Activated naive CD4-positive, alpha-beta T cell treated with anti-CD3 and anti-CD28 coated beads for 36 hours (primary cell): ENCODE measurements at regions of chr18 and their contacts with region 1.

Region 1: GRCh38 chr18:76398896-76399612 is 96.0 kb downstream of the ZNF516 start:
- DNase-seq: peak; percentile 88
- H3K4me3 Mint-ChIP-seq: no peak overlapping the region
- H3K27ac Mint-ChIP-seq: no peak overlapping the region
- H3K4me1 Mint-ChIP-seq: peaks cover 6% of the 10 kb centered on the region
- H3K27me3 Mint-ChIP-seq: no peaks in the 10 kb centered on the region

Region 2: DNA sequence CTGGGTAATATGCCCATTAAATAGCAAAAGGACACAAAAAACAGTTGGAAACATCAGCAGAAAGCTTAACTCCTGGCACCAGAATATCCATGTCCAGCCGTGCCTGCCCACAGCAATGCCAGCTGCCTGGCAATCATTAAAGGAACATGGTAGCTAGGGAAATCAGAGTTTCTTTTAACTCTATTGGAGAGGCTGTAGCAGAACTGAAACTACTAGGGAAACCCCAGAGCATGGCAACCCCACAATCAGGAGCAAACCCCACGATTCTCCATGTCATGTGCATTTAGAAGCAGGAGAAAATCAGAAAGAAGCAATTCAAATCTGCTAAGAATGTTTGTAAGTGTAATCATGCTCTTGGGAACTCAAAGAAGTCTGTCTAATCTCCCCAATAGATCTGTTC is 562.5 kb before region 1 on chr18:
- CTCF ChIA-PET with region 1: no interaction called
- intact Hi-C with region 1: no loop called
- DNase-seq: no peak
- H3K4me3 Mint-ChIP-seq: no peak overlapping the region
- H3K27ac Mint-ChIP-seq: no peak overlapping the region
- H3K4me1 Mint-ChIP-seq: no peaks in the 10 kb centered on the region
- H3K27me3 Mint-ChIP-seq: peaks cover 5% of the 10 kb centered on the region

Region 3: DNA sequence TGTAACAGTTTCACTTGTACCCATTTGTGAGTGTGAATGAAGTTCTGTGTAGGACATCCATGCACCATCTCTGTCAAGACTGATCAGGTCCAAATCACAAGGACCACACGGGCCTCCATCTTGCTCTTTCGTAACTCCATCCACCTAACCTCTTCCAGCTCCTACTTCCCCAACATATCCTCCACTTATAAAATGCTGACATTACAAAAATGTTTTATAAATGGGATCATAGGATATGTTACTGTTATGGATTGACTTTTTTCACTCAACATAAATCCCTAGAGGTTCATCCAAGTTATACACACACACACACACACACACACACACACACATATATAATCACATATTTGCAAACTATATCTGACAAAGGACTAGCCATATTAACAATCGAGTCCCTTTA is 380.8 kb before region 1 on chr18:
- CTCF ChIA-PET with region 1: no interaction called
- intact Hi-C with region 1: no loop called
- DNase-seq: no peak
- H3K4me3 Mint-ChIP-seq: no peak overlapping the region
- H3K27ac Mint-ChIP-seq: no peak overlapping the region
- H3K4me1 Mint-ChIP-seq: no peaks in the 10 kb centered on the region
- H3K27me3 Mint-ChIP-seq: peaks cover 6% of the 10 kb centered on the region

Region 4: DNA sequence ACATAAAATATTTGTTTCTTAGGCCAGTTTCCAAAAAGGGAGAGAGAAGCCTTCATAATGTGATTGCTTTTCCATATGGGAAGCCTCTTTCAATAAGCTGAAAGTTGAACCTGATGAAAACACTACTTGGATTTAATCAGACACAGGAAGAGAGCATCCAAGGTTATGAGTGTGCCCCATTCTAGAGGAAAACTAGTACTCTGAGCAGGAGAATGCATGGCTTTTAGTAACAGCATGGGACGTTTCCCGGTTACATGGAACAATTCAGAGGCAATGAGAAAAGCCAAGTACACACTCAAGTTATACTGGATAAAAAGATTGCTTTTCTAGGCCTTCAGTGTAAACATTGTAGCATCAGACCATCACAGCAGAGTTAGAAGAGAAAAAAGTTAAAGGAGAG is 219.8 kb before region 1 on chr18:
- CTCF ChIA-PET with region 1: no interaction called
- intact Hi-C with region 1: no loop called
- DNase-seq: no peak
- H3K4me3 Mint-ChIP-seq: no peak overlapping the region
- H3K27ac Mint-ChIP-seq: no peak overlapping the region
- H3K4me1 Mint-ChIP-seq: no peaks in the 10 kb centered on the region
- H3K27me3 Mint-ChIP-seq: no peaks in the 10 kb centered on the region

Region 5: DNA sequence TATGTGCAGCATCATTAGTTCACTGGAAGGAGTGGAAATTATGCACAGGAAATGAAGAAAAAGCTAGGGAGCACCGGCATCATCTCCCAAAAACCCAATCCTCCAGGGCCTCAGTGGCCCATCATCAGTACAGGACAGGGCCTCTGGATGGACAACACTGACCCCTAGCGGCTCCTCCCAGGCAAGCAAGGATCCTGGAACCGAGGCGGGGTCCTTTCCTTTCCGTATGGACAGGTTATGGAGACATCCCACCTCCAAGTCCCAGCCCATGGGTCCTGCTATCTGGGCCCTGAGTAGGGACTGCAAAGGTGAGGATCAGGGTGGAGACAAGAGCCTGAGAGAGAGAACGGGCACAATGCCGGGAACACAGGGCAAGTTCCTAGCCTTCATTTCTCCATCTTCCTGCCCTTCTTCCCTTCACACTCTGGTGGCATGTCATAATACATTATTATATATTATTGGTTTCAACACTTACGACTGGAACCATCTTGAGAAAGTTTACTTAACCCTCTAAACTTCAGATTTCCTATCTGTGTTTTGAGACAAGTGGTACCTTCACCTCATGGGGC is 27.8 kb after region 1 on chr18:
- CTCF ChIA-PET with region 1: no interaction called
- intact Hi-C with region 1: loop called (anchors 2 kb)
- DNase-seq: peak; percentile 23
- H3K4me3 Mint-ChIP-seq: no peak overlapping the region
- H3K27ac Mint-ChIP-seq: no peak overlapping the region
- H3K4me1 Mint-ChIP-seq: peaks cover 27% of the 10 kb centered on the region
- H3K27me3 Mint-ChIP-seq: no peaks in the 10 kb centered on the region

Region 6: GRCh38 chr18:76437011-76437410 is 38.0 kb after region 1 on chr18:
- CTCF ChIA-PET with region 1: no interaction called
- intact Hi-C with region 1: no loop called
- DNase-seq: no peak
- H3K4me3 Mint-ChIP-seq: no peak overlapping the region
- H3K27ac Mint-ChIP-seq: no peak overlapping the region
- H3K4me1 Mint-ChIP-seq: no peaks in the 10 kb centered on the region
- H3K27me3 Mint-ChIP-seq: no peaks in the 10 kb centered on the region

Region 7: DNA sequence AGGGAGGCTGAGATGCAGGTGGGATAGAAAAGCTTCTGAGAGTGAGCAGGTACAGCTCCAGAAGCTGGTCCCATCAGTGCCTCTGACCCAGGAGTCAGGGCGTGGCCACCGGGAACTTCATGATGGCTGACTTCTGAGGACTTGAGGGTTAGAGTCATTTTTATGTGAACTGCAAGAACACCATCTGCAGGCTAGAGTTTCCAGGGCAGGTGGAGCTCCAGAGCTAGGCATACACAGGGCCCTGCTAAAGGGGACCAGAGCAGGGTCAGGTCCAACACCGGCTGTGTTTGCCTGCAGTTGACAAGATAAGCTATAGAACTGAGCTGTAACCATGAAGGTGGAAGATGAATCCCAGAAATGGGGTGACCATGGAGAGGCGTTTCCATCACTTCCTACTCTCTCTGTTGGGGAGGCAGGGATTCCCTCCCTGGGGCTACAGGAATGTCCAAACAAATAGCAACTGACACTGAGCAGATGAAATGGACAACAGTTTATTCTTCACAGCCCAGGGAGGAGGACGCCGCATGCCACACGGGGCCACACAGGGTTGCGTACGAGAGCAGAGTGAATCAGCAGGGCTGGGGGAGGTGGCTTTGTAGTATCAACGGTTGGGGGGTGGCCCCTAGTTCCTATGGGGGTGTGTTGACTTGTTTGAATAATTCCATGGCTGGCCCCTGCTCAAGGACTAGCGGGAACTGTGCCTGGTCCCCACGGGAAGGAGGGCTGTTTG is 173.6 kb after region 1 on chr18:
- CTCF ChIA-PET with region 1: interaction called, 4 read pairs
- intact Hi-C with region 1: loop called (anchors 1 kb)
- DNase-seq: no peak
- H3K4me3 Mint-ChIP-seq: no peak overlapping the region
- H3K27ac Mint-ChIP-seq: no peak overlapping the region
- H3K4me1 Mint-ChIP-seq: no peaks in the 10 kb centered on the region
- H3K27me3 Mint-ChIP-seq: peaks cover 7% of the 10 kb centered on the region

Region 8: DNA sequence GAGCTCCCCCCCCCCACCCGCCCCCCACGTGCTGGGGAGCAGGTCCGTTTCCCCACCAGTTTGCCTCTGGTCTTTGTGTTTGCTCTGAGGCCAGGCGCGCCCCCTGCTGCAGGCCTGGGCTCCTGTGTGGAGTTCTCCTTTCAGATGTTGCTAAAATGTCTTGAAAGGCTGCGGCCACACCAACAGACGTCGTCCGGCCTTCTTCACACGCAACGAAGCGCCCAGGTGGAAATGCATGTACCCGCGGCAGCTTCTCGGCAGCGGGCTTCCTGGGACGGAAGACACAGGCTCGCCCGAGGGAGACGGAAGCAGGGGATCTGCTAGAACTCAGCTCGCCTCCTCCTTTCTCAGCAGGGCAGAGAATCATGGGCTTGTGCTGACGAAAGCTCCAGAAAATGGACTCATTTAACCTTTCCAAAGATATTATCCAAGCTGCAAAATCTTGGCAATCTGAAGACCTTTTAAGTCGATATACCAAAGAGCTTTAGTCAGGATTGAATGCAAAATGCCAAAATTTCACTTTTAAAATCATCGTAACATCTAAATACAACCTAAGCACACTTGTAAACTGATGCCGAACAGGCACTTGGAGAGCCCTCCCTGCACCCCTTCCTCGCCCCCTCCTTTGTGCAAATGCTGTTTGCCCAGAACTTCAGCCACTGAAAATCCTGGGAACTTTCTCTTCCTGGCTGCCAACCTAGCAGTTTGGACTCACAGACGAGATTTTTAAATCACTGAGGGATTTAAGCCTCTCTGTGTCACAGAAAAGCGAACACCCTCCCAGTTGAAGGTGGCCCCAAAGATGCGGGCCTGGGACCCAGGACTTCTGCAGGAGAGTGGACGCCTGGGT is 221.5 kb after region 1 on chr18:
- CTCF ChIA-PET with region 1: interaction called, 7 read pairs
- intact Hi-C with region 1: loop called (anchors 1 kb)
- DNase-seq: peak; percentile 48
- H3K4me3 Mint-ChIP-seq: peak overlapping the region; percentile 54
- H3K27ac Mint-ChIP-seq: no peak overlapping the region
- H3K4me1 Mint-ChIP-seq: peaks cover 20% of the 10 kb centered on the region
- H3K27me3 Mint-ChIP-seq: peaks cover 30% of the 10 kb centered on the region

Region 9: DNA sequence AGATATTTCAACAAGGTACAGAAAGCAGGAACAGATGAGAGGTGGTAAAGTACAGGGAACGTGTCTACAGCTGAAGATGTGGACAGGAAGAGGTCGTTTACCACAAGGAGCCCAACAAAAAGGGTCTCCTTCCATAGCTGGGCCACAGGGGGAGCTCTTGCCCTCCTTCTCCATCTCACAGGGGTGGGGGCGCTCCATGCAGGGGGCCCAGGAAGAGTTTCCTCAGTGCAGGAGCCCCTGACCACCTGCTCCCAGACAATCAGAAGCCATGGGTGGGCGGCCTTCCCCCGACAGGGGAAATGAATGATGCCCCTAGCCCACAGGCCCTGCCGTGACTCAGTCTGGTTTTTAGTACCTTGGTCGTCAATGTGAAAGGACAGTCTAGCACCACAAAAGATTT is 259.6 kb after region 1 on chr18:
- CTCF ChIA-PET with region 1: interaction called, 13 read pairs
- intact Hi-C with region 1: no loop called
- DNase-seq: peak; percentile 21
- H3K4me3 Mint-ChIP-seq: no peak overlapping the region
- H3K27ac Mint-ChIP-seq: no peak overlapping the region
- H3K4me1 Mint-ChIP-seq: peaks cover 16% of the 10 kb centered on the region
- H3K27me3 Mint-ChIP-seq: peaks cover 34% of the 10 kb centered on the region

Region 10: GRCh38 chr18:76686737-76687262 is 287.7 kb after region 1 on chr18:
- CTCF ChIA-PET with region 1: interaction called, 14 read pairs
- intact Hi-C with region 1: loop called (anchors 1 kb)
- DNase-seq: peak; percentile 62
- H3K4me3 Mint-ChIP-seq: no peak overlapping the region
- H3K27ac Mint-ChIP-seq: no peak overlapping the region
- H3K4me1 Mint-ChIP-seq: peaks cover 11% of the 10 kb centered on the region
- H3K27me3 Mint-ChIP-seq: peaks cover 14% of the 10 kb centered on the region

Region 11: GRCh38 chr18:76709659-76710645 is 310.9 kb after region 1 on chr18:
- CTCF ChIA-PET with region 1: interaction called, 67 read pairs
- intact Hi-C with region 1: loop called (anchors 1 kb)
- DNase-seq: peak; percentile 75
- H3K4me3 Mint-ChIP-seq: no peak overlapping the region
- H3K27ac Mint-ChIP-seq: no peak overlapping the region
- H3K4me1 Mint-ChIP-seq: peaks cover 4% of the 10 kb centered on the region
- H3K27me3 Mint-ChIP-seq: no peaks in the 10 kb centered on the region